Psoas muscle (tissue), 8 donors: ENCODE measurements at regions of chr7 and their contacts with region 1.

Region 1: DNA sequence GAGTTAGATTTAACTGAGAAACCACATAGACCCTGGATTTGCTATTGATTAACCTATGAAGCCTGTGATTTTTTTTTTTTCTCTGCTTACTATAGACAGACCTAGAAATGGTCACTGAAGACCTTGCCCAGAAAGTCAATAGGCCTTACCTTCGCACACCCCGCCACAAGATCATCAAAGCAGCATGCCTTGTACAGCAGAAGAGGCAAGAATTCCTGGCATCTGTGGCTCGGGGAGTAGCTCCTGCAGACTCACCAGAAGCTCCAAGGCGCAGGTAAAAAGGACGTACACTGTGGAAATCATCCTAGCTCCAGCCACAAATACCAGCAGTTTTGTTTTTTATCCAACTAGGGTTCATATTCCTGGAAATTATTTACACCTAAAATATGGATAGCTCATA is 56.2 kb upstream of the GATAD1 start:
- DNase-seq: no peak
- ATAC-seq: no peak
- H3K4me3 ChIP-seq: no peak overlapping the region
- H3K27ac ChIP-seq: no peak overlapping the region
- H3K4me1 ChIP-seq: no peaks in the 10 kb centered on the region
- H3K27me3 ChIP-seq: no peaks in the 10 kb centered on the region
- CTCF ChIP-seq: no peak

Region 2: DNA sequence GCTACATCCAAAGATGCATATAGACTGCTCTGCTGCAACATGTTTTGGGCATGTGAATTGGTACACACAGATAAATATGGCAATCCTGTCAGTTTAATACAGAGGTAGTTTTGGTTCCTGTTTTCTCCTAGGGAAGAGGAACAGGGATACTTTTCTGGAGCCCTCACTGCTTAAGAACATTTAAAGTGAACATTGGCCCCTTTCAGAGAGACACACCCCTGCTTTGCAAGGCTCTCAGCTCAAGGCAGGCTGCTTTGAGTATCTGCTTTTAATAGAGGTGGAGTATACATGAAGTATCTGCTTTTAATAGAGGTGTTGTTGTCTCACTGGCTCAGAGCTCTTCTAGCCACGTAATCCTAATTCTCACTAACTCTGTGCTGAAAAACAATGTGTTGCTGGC is 295.7 kb before region 1 on chr7:
- intact Hi-C with region 1: loop called in 1 of 2 experiments (anchors 10 kb)
- DNase-seq: no peak
- ATAC-seq: no peak
- H3K4me3 ChIP-seq: no peak overlapping the region
- H3K27ac ChIP-seq: no peak overlapping the region
- H3K4me1 ChIP-seq: no peaks in the 10 kb centered on the region
- H3K27me3 ChIP-seq: no peaks in the 10 kb centered on the region
- CTCF ChIP-seq: no peak